PC-3 (cell line): ENCODE measurements at regions of chr7 and their contacts with region 1.

Region 1: GRCh38 chr7:131556052-131556908 is at the start of gene PODXL:
- DNase-seq: peak; percentile 60
- ATAC-seq: peak; percentile 81
- H3K4me3 ChIP-seq: peak within 1 kb of the TSS; percentile 95
- H3K27ac ChIP-seq: no peak within 1 kb of the TSS
- H3K4me1 ChIP-seq: peaks cover 29% of the 10 kb centered on the region
- H3K27me3 ChIP-seq: no peaks in the 10 kb centered on the region
- CTCF ChIP-seq: no peak
- total RNA-seq, gene PODXL: 44.2 and 80.5 TPM in 2 replicates

Region 2: GRCh38 chr7:131507592-131508331 is 48.5 kb before region 1 on chr7:
- CTCF ChIA-PET with region 1: no interaction called
- POLR2A ChIA-PET with region 1: no interaction called
- intact Hi-C with region 1: loop called (anchors 5 kb)
- DNase-seq: peak; percentile 72
- ATAC-seq: peak; percentile 89
- H3K4me3 ChIP-seq: no peak overlapping the region
- H3K27ac ChIP-seq: no peak overlapping the region
- H3K4me1 ChIP-seq: no peaks in the 10 kb centered on the region
- H3K27me3 ChIP-seq: no peaks in the 10 kb centered on the region
- CTCF ChIP-seq: peak; percentile 91

Region 3: GRCh38 chr7:131538071-131538790 is 18.0 kb before region 1 on chr7:
- CTCF ChIA-PET with region 1: no interaction called
- POLR2A ChIA-PET with region 1: interaction called, 6 read pairs
- intact Hi-C with region 1: loop called (anchors 2 kb)
- DNase-seq: peak; percentile 88
- ATAC-seq: peak; percentile 91
- H3K4me3 ChIP-seq: no peak overlapping the region
- H3K27ac ChIP-seq: peak overlapping the region; percentile 87
- H3K4me1 ChIP-seq: peaks cover 35% of the 10 kb centered on the region
- H3K27me3 ChIP-seq: no peaks in the 10 kb centered on the region
- CTCF ChIP-seq: no peak

Region 4: DNA sequence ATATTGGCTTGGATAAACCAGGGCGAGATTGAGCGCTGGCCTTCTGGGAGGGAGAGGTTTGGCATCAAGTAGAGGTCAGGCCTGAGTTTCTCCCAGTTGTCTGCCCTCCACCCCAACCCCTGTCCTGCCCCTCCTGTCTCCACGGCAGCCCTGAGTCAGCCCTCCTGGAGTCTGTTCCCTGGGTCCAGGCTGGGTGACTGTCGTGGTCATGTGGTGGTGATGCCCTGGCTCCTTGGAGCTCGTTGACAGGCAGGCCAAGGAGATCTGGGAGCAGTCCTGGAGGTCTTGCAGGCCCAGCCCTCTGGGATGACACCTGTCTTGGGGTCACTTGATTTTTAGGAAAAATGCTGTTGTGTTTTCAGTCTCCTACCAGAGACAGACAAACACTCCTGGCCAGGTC is 53.7 kb after region 1 on chr7:
- CTCF ChIA-PET with region 1: no interaction called
- POLR2A ChIA-PET with region 1: no interaction called
- intact Hi-C with region 1: loop called (anchors 5 kb)
- DNase-seq: no peak
- ATAC-seq: no peak; the same call in 1 of the 2 replicates
- H3K4me3 ChIP-seq: no peak overlapping the region
- H3K27ac ChIP-seq: no peak overlapping the region
- H3K4me1 ChIP-seq: peaks cover 17% of the 10 kb centered on the region
- H3K27me3 ChIP-seq: no peaks in the 10 kb centered on the region
- CTCF ChIP-seq: no peak

Region 5: DNA sequence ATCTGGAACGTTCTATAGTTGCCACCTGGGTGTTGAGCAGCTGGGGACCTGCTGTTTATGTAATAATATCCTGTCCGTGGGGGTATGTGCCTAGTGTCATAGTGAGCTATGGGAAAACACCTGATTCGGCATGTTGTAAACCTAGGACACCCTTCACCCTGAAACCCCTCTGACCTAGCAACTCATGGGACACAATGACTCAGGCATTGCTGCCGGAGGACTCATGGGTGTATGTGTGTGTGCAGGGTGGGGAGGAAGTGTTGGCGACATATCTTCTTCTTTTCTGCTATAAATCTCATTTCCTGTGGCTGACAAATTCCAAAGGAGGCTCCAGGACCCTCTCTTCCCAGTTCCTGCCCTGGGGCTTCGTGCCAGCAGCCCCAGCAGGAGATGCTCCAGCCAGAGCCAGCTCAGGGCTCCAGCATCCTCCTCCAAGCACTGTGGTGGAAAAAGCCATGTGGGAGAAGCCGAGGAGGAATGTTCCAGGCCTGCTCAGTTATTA is 77.1 kb after region 1 on chr7:
- CTCF ChIA-PET with region 1: interaction called, 3 read pairs
- POLR2A ChIA-PET with region 1: no interaction called
- intact Hi-C with region 1: loop called (anchors 5 kb)
- DNase-seq: peak; percentile 86
- ATAC-seq: peak; percentile 85
- H3K4me3 ChIP-seq: no peak overlapping the region
- H3K27ac ChIP-seq: peak overlapping the region; percentile 85
- H3K4me1 ChIP-seq: peaks cover 39% of the 10 kb centered on the region
- H3K27me3 ChIP-seq: no peaks in the 10 kb centered on the region
- CTCF ChIP-seq: no peak

Region 6: DNA sequence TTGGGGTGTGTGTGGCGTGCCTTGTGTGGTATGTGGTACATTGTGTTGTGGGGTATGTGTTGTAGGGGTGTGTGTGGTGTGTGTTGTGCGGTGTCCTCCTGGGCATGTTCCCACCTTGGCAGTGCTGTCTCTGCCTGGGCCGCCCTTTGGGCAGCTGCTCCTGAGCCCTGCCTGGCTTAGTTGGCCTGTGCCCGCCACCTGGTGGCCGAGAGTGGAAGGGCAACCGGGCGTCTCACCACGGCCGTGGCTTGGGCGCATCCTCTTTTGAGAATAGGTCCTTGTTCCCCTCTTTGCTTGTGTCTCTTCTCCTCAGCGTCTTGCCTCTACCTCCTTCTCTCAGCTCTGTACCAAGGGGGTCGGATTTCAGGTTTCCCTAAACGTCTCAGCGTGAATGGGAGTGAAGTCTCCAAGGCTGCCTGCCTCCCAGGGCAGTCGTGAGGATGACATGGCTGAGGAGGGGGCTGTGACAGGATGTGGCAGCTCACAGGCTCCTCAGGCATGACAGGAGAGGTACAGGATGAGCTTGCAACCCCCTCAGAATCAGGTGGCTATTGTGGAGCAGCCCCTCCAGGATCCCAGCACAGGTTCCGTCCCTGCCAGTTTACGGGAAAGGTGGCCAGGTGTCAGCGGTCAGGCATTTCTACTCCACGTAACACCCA is 98.5 kb after region 1 on chr7:
- CTCF ChIA-PET with region 1: interaction called, 3 read pairs
- POLR2A ChIA-PET with region 1: no interaction called
- intact Hi-C with region 1: loop called (anchors 2 kb)
- DNase-seq: peak; percentile 83
- ATAC-seq: peak; percentile 95
- H3K4me3 ChIP-seq: no peak overlapping the region
- H3K27ac ChIP-seq: no peak overlapping the region
- H3K4me1 ChIP-seq: peaks cover 10% of the 10 kb centered on the region; the same call in 1 of the 2 replicates
- H3K27me3 ChIP-seq: no peaks in the 10 kb centered on the region
- CTCF ChIP-seq: peak; percentile 85